Gastrocnemius medialis (tissue), 4 donors: ENCODE measurements at regions of chr17 and their contacts with region 1.

Region 1: GRCh38 chr17:58517734-58518609 is 3.5 kb upstream of the MTMR4 start:
- DNase-seq: peak; percentile 100
- ATAC-seq: peak; percentile 89
- H3K4me3 ChIP-seq: peak overlapping the region; percentile 76 to 93 (median 83)
- H3K27ac ChIP-seq: peak overlapping the region; percentile 91 to 99 (median 93)
- H3K4me1 ChIP-seq: peaks cover 30 to 37% of the 10 kb centered on the region in 2 donors
- H3K27me3 ChIP-seq: no peaks in the 10 kb centered on the region
- CTCF ChIP-seq: no peak
- POLR2A ChIP-seq: peak; percentile 45 to 68

Region 2: DNA sequence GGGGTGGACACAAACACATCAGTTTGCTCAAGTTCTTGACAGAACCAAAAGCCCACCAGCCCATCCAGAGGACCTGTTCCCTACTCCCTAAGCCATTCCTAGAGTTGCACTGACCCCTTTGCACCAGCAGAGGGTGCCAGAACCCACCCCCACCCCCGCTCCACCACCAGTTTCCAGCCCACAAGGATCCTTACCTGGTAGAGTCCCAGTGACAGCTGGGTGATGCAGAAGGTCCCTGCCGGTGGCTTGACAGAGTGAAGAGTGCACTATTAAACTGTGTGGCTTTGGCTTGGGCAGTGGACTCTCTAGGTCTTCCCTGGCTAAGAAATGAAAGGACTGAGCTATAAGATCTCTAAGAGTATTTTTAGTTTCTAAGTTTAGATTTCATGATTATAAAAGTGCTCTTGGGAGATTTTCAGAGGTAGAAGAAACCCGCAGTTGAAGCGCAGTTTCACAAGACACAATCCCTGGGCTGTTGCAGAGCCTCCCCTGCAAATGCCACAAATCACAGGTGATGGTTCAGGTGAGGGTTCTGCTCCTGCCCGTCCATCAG is 69.8 kb after region 1 on chr17:
- in situ Hi-C with region 1: no loop called
- intact Hi-C with region 1: loop called (anchors 1 kb)
- DNase-seq: peak in 1 of 2 donors; percentile 20
- ATAC-seq: peak; percentile 45 to 84
- H3K4me3 ChIP-seq: no peak overlapping the region
- H3K27ac ChIP-seq: no peak overlapping the region
- H3K4me1 ChIP-seq: no peaks in the 10 kb centered on the region
- H3K27me3 ChIP-seq: no peaks in the 10 kb centered on the region
- CTCF ChIP-seq: peak; percentile 61 to 87 (median 73)
- POLR2A ChIP-seq: no peak

Region 3: DNA sequence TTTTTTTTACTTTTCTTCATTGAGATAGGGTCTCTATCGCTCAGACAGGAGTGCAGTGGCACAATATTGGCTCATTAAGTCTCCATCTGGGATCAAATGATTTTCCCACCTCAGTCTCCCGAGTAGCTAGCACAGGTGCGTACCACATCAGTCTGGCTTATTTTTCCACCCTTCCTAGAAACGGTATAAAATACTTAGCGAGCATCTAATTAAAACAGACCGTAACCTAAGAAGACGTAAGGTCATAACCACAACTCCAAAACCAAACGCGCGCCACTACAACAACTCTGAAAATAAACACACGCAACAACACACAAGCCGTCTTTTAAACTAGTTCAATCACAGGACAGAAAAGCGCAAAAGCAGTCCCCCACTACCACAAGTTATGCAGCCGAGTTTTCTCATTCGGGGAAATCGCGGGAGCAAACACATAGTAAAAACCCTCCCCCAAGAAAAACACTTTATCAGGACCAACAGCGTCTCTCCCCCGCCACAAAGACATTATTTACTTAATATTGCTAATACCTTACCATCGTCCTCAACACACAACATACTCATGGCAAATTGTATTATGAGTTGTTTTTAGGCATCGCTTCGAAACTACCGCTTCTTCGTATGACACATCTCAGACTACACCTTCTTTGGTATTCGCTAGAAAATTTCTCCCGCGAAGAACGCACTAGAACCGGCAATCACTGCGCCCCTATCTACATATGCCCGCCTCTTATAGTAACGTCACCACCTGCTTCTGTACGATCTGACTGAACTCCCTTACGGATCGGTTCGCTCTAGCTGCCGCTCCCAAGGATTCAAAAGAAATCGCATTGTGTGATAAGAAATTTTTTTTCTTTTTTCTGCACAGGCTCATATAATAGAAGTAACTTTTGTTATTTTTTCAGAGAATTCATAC is 141.1 kb after region 1 on chr17:
- in situ Hi-C with region 1: loop called in 1 of 4 experiments (anchors 25 kb)
- intact Hi-C with region 1: loop called (anchors 1 kb)
- DNase-seq: peak; percentile 41 to 79
- ATAC-seq: peak; percentile 96 to 99
- H3K4me3 ChIP-seq: peak overlapping the region; percentile 55 to 66 (median 61)
- H3K27ac ChIP-seq: peak overlapping the region; percentile 65 to 80 (median 79)
- H3K4me1 ChIP-seq: no peaks in the 10 kb centered on the region
- H3K27me3 ChIP-seq: no peaks in the 10 kb centered on the region
- CTCF ChIP-seq: peak in 1 of 5 experiments; percentile 41
- POLR2A ChIP-seq: peak; percentile 94 to 98

Region 4: GRCh38 chr17:58808645-58809563 is 290.9 kb after region 1 on chr17:
- in situ Hi-C with region 1: no loop called
- intact Hi-C with region 1: no loop called
- DNase-seq: no peak
- ATAC-seq: no peak
- H3K4me3 ChIP-seq: no peak overlapping the region
- H3K27ac ChIP-seq: no peak overlapping the region
- H3K4me1 ChIP-seq: no peaks in the 10 kb centered on the region
- H3K27me3 ChIP-seq: no peaks in the 10 kb centered on the region
- CTCF ChIP-seq: no peak
- POLR2A ChIP-seq: no peak

Region 5: DNA sequence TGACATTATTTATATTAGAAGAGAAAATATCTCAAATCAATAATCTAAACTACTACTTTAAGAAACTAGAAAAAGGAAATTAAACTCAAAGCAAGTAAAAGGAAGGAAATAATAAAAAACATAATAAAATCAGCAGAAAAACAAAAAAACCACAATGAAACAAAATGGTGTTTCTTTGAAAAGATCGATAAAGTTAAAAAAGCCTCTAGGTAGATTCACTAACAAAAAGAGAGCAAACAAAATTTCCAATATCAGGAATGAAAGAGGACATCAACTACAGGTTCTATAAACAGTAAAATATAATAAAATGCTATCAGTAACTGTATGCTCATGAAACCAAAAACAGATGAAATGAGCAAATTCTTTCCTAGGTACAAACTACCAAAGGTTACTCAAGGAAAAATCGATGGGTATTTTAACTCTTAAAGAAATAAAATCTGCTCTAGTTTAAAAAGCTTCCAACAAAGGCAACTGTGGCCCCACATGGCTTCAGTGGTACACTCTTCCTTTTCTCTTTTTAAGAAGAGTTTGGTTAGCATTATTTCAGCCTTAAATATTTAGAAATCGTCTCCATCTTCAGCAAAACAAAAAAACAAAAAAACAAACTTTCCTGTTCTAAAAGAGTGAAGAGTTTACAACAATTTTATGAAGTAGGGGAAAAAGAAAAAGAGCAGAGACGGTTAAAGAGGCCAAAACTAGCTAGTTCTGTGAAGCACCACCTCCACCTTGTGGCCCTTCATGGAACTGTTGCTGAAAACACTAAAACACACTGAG is 486.6 kb after region 1 on chr17:
- in situ Hi-C with region 1: loop called in 3 of 4 experiments (anchors 10 to 25 kb)
- intact Hi-C with region 1: loop called (anchors 1 kb)
- DNase-seq: peak; percentile 6 to 29
- ATAC-seq: peak; percentile 74 to 85
- H3K4me3 ChIP-seq: no peak overlapping the region
- H3K27ac ChIP-seq: no peak overlapping the region
- H3K4me1 ChIP-seq: no peaks in the 10 kb centered on the region
- H3K27me3 ChIP-seq: no peaks in the 10 kb centered on the region
- CTCF ChIP-seq: peak; percentile 77 to 94 (median 79)
- POLR2A ChIP-seq: no peak

Region 6: GRCh38 chr17:59106463-59107305 is 588.7 kb after region 1 on chr17 and contains the start of gene TRIM37:
- in situ Hi-C with region 1: no loop called
- intact Hi-C with region 1: loop called (anchors 2 kb)
- DNase-seq: peak; percentile 96 to 97
- ATAC-seq: peak; percentile 98 to 99
- H3K4me3 ChIP-seq: peak within 1 kb of the TSS; percentile 67 to 99 (median 91)
- H3K27ac ChIP-seq: peak within 1 kb of the TSS; percentile 84 to 99 (median 92)
- H3K4me1 ChIP-seq: peaks cover 7 to 25% of the 10 kb centered on the region in 2 donors
- H3K27me3 ChIP-seq: no peaks in the 10 kb centered on the region
- CTCF ChIP-seq: peak in 2 of 5 experiments; percentile 6 to 27
- POLR2A ChIP-seq: peak; percentile 88 to 89
- total RNA-seq, gene TRIM37: 16.1 to 17.5 (median 16.3) TPM